Dorsolateral prefrontal cortex (tissue), 120 donors: ENCODE measurements at regions of chr15 and their contacts with region 1.

Region 1: DNA sequence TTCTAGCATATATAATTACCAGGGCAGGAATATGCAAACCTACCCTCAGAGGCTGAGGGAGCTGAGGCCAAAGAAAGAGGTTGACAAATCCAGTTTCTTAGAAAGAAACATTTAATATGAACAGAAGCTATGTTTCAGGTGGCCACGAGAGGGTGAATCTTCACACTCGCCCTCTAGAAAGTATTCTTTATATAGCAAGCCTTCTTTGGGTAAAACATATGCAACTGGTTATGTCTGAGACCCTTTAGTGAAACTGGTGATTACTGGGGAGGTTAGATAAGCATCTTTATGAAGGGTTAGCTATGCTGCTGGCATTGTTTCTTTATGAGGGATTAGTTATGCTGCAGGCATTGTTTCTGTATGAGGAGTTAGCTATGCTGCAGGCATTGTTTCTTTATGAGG is 50.7 kb upstream of the GOLGA6L2 start:
- DNase-seq: peak in 2 of 10 donors; percentile 10 to 18
- H3K4me3 ChIP-seq: peak overlapping the region in 2 of 59 donors; percentile 20 to 47
- H3K27ac ChIP-seq: no peak overlapping the region
- H3K27me3 ChIP-seq: peaks cover 0 to 13% (median 0%) of the 10 kb centered on the region in 45 donors
- CTCF ChIP-seq: peak in 55 of 56 donors; percentile 23 to 68 (median 51)

Region 2: GRCh38 chr15:23064156-23064555 is 433.6 kb before region 1 on chr15:
- intact Hi-C with region 1: no loop called
- DNase-seq: no peak
- H3K4me3 ChIP-seq: no peak overlapping the region
- H3K27ac ChIP-seq: no peak overlapping the region
- H3K27me3 ChIP-seq: peaks cover 0 to 8% (median 0%) of the 10 kb centered on the region in 45 donors
- CTCF ChIP-seq: no peak

Region 3: GRCh38 chr15:23081271-23081670 is 416.4 kb before region 1 on chr15:
- intact Hi-C with region 1: no loop called
- DNase-seq: peak in 2 of 10 donors; percentile 25 to 40
- H3K4me3 ChIP-seq: no peak overlapping the region
- H3K27ac ChIP-seq: peak overlapping the region in 1 of 59 donors; percentile 11
- H3K27me3 ChIP-seq: peaks cover 0 to 4% (median 0%) of the 10 kb centered on the region in 45 donors
- CTCF ChIP-seq: no peak

Region 4: GRCh38 chr15:23538648-23539047 is 40.9 kb after region 1 on chr15:
- intact Hi-C with region 1: no loop called
- DNase-seq: no peak
- H3K4me3 ChIP-seq: no peak overlapping the region
- H3K27ac ChIP-seq: no peak overlapping the region
- H3K27me3 ChIP-seq: peaks cover 0 to 12% (median 0%) of the 10 kb centered on the region in 45 donors
- CTCF ChIP-seq: no peak

Region 5: DNA sequence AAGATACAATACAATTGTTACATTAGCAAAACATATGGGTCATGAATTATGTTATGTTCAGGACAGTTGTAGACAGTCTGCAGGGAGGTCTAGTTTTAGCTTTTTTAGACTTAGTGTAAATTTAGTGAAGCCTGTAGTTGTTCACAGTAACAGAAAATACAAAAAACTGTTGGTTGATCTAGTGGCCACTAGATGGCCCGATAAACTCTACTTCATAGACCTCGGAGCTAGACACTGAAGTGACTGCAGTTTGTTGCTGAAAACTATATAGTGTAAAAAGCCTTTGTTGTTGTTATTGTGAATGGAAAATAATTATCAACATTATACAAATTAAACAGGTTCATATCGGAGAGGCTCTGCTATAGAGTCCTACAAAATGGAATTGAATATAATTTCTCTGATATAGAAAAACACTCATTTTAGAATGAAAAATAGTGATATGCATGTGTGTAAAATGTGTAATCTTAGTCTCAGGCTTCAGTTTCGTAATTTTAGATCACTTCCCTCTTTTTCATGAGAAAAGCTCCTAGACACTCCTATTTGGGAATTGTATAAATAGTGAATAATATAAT is 131.6 kb after region 1 on chr15:
- intact Hi-C with region 1: loop called in 1 of 2 experiments (anchors 5 kb)
- DNase-seq: no peak
- H3K4me3 ChIP-seq: no peak overlapping the region
- H3K27ac ChIP-seq: no peak overlapping the region
- H3K27me3 ChIP-seq: peaks cover 0 to 59% (median 13%) of the 10 kb centered on the region in 45 donors
- CTCF ChIP-seq: peak; percentile 27 to 72 (median 60)